ENCODE measurements at regions of chr3 and their contacts with region 1.

Region 1: DNA sequence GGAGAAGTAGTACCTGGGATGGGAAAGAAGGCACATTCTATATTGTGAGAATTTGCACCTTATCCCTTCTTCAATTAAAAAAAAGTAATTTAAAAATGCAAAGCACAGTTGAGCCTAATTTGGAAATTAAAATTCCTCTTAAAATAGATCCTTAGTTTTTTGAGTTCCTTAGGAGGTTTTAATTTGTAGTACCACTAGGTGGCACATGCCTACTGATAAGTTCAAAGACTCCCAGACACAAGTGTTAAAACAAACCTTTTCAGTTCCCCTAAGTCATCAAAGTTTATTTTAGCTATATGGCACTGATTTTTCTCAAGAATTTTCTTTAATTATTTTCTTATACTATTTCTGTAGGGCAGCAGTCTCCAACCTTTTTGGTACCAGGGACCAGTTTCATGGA is 127.6 kb upstream of the AZI2 start:
- DNase-seq: peak; percentile 5
- ATAC-seq: peak; percentile 72
- H3K4me3 ChIP-seq: no peak overlapping the region
- H3K27ac ChIP-seq: no peak overlapping the region
- H3K4me1 ChIP-seq: no peaks in the 10 kb centered on the region
- H3K27me3 ChIP-seq: no peaks in the 10 kb centered on the region
- CTCF ChIP-seq: peak; percentile 46 to 59 (median 53); a peak in 5 of 6 replicates
- EP300 ChIP-seq: no peak
- POLR2A ChIP-seq: no peak
- RAD21 ChIP-seq: peak; percentile 42

Region 2: DNA sequence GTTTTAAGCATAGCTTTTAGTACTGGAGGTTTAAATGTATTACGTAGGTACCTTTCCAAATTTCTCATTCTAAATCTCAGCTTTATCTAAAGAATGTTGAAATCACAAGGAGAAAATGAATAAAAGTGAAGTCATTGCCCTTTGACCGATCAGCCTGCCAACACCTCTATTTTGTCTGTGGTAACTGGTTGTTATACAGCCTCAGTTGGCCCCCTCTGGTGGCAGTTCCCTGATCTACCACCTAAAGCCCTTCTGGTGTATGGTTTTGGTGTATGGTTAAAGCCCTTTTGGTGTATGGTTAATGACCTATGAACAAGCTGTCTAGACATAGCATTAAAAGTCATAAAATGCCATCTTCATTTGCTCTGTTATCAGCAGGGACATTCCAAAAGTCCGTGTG is 250.6 kb after region 1 on chr3:
- CTCF ChIA-PET with region 1: interaction called, 10 read pairs
- POLR2A ChIA-PET with region 1: no interaction called
- RAD21 ChIA-PET with region 1: no interaction called
- SMC1A ChIA-PET with region 1: interaction called, 3 read pairs
- in situ Hi-C with region 1: no loop called
- intact Hi-C with region 1: loop called (anchors 2 kb)
- DNase-seq: peak; percentile 8
- ATAC-seq: peak; percentile 95
- H3K4me3 ChIP-seq: no peak overlapping the region
- H3K27ac ChIP-seq: no peak overlapping the region
- H3K4me1 ChIP-seq: no peaks in the 10 kb centered on the region
- H3K27me3 ChIP-seq: no peaks in the 10 kb centered on the region
- CTCF ChIP-seq: peak; percentile 46 to 61 (median 58)
- EP300 ChIP-seq: no peak
- POLR2A ChIP-seq: no peak
- RAD21 ChIP-seq: peak; percentile 51

Region 3: DNA sequence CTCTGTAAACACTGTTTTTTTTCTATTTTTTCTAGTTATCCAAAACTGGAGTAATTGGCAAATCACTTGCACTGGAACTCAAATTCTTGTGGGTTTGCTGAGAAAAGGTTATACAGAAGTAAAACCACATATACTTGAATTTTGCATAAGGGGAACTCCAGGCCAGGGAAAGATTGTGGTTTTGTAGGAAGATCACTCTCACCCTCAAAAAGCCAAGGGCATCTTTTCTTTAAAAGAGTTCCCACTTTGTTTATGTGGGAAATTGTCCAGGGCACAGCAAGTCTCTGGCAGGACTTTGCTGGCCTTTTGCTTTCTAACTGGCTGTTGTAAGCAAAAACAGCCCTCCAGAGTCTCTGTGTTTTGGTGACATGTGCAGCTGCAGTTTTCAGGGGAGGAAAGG is 464.3 kb after region 1 on chr3:
- CTCF ChIA-PET with region 1: no interaction called
- POLR2A ChIA-PET with region 1: no interaction called
- RAD21 ChIA-PET with region 1: no interaction called
- SMC1A ChIA-PET with region 1: no interaction called
- in situ Hi-C with region 1: no loop called
- intact Hi-C with region 1: no loop called
- DNase-seq: peak; percentile 33
- ATAC-seq: peak; percentile 84
- H3K4me3 ChIP-seq: no peak overlapping the region
- H3K27ac ChIP-seq: peak overlapping the region; percentile 38; the same call in 1 of the 2 replicates
- H3K4me1 ChIP-seq: peaks cover 14% of the 10 kb centered on the region
- H3K27me3 ChIP-seq: no peaks in the 10 kb centered on the region
- CTCF ChIP-seq: no peak
- EP300 ChIP-seq: peak in 1 of 2 experiments; percentile 35; a peak in 1 of 4 replicates
- POLR2A ChIP-seq: no peak
- RAD21 ChIP-seq: no peak